A549 (cell line): ENCODE measurements at regions of chr1 and their contacts with region 1.

Region 1: DNA sequence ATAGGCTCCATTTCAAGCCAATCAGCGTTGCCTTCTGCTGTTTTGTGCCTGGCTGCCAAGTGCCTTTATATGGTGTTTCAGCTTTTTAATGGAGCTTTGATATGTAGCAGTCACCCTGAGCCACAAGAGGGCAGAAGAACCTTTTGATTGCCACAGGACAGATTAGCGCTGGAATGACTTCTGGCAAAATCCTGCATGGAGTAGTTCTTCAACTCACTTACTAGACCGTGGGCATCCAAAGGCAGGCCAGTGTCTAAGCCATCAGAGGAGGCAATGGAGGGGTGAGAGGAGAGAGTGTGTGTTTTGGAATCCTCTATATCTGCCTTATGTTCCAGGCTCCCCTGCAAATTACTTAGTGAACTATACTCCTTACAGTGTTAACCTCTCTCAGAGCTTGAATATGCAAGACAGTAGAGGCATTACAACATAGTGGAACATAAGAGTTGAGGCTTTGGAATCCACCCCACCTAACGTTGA is 56.2 kb downstream of the ST3GAL3 start:
- DNase-seq: peak; percentile 41 to 79
- ATAC-seq: peak; percentile 99
- H3K4me3 ChIP-seq: no peak overlapping the region
- H3K27ac ChIP-seq: peak overlapping the region; percentile 52 to 65; a peak in 4 of 6 replicates
- H3K4me1 ChIP-seq: peaks cover 10% of the 10 kb centered on the region; the same call in 1 of the 3 replicates
- CTCF ChIP-seq: peak; percentile 83
- EP300 ChIP-seq: no peak
- POLR2A ChIP-seq: no peak
- RAD21 ChIP-seq: peak; percentile 92 to 96

Region 2: GRCh38 chr1:43622471-43622870 is 141.1 kb before region 1 on chr1:
- CTCF ChIA-PET with region 1: no interaction called
- POLR2A ChIA-PET with region 1: no interaction called
- DNase-seq: no peak
- ATAC-seq: no peak
- H3K4me3 ChIP-seq: no peak overlapping the region
- H3K27ac ChIP-seq: no peak overlapping the region
- H3K4me1 ChIP-seq: no peaks in the 10 kb centered on the region
- CTCF ChIP-seq: no peak
- EP300 ChIP-seq: no peak
- POLR2A ChIP-seq: no peak
- RAD21 ChIP-seq: no peak

Region 3: GRCh38 chr1:43774359-43774758 is 10.8 kb after region 1 on chr1:
- CTCF ChIA-PET with region 1: interaction called, 19 read pairs
- POLR2A ChIA-PET with region 1: no interaction called
- DNase-seq: no peak
- ATAC-seq: peak in 1 of 2 experiments; percentile 52; a peak in 3 of 6 replicates
- H3K4me3 ChIP-seq: no peak overlapping the region
- H3K27ac ChIP-seq: peak overlapping the region; percentile 21 to 56; a peak in 2 of 6 replicates
- H3K4me1 ChIP-seq: peaks cover 31% of the 10 kb centered on the region
- CTCF ChIP-seq: no peak
- EP300 ChIP-seq: no peak
- POLR2A ChIP-seq: no peak
- RAD21 ChIP-seq: no peak

Region 4: DNA sequence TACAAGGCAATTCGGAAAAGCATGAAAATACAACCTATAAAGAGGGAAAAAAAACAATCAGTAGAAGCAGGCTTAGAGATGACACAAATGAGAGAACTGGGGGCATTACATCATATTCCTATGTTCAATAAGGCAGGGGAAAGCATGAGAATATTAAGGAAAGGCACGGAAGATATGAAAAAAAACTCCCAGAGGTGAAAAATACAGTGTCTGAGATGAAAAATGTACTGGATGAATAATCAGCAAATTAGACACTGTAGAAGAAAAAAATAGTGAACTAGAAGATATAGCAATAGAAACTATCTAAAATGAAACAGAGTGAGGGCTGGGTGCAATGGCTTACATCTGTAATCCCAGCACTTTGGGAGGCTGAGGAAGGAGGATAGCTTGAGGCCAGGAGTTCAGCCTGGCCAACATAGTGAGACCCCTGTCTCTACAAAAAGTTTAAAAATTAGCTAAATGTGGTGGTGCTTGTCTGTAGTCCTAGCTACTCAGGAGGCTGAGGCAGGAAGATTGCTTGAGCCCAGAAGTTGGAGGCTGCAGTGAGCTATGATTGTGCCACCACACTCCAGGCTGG is 45.6 kb after region 1 on chr1:
- CTCF ChIA-PET with region 1: interaction called, 12 read pairs
- POLR2A ChIA-PET with region 1: no interaction called
- DNase-seq: no peak
- ATAC-seq: no peak
- H3K4me3 ChIP-seq: no peak overlapping the region
- H3K27ac ChIP-seq: no peak overlapping the region
- H3K4me1 ChIP-seq: no peaks in the 10 kb centered on the region
- CTCF ChIP-seq: no peak
- EP300 ChIP-seq: no peak
- POLR2A ChIP-seq: no peak
- RAD21 ChIP-seq: no peak

Region 5: GRCh38 chr1:43822040-43822439 is 58.5 kb after region 1 on chr1:
- CTCF ChIA-PET with region 1: no interaction called
- POLR2A ChIA-PET with region 1: no interaction called
- DNase-seq: peak; percentile 71 to 85
- ATAC-seq: peak; percentile 92 to 93
- H3K4me3 ChIP-seq: no peak overlapping the region
- H3K27ac ChIP-seq: peak overlapping the region; percentile 67 to 78
- H3K4me1 ChIP-seq: peaks cover 16% of the 10 kb centered on the region
- CTCF ChIP-seq: no peak
- EP300 ChIP-seq: no peak
- POLR2A ChIP-seq: no peak
- RAD21 ChIP-seq: no peak

Region 6: DNA sequence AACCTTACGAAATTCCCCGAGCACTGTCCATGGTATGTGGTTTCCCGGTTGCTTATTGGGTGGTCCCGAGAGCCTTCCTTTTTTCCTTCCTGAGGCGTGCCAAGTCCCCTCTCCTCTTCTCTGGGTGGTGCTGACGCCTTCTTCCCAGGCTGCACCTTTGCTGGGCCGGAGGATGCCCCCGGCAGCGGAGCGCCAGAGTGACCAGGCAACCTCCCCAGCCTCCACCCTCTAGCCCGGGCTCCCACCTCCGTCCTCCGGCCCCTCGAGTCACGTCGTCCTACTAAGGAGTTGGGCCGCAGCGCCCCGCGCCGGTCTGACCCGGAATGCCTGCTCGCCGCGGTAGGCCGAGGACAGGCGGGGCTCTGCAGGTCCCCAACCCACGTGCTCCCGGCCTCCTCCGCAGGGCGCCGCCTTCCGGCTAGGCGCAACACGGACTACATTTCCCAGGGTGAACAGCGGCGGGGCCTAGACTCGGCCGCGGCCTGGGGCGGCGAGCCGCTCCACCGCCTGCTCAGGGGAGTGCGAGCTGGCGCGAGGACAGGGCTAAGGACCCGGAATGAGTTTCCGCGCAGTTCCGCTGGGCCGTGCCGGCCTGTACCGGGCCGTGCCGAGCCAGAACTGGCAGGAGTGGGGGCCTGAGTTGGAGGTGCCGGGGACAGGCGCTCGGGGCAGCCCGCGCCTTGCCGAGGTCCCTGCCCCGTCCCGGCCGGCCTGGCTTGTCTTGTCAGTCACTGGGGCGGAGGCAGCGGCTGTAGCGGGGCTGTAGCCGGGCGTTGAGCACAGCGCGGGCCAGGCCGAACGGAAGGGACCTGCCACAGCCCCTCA is 182.9 kb after region 1 on chr1 and contains the start of gene IPO13:
- CTCF ChIA-PET with region 1: interaction called, 243 read pairs
- POLR2A ChIA-PET with region 1: no interaction called
- DNase-seq: peak; percentile 90 to 96
- ATAC-seq: peak; percentile 97 to 98
- H3K4me3 ChIP-seq: peak within 1 kb of the TSS; percentile 68
- H3K27ac ChIP-seq: peak within 1 kb of the TSS; percentile 94 to 97
- H3K4me1 ChIP-seq: peaks cover 13% of the 10 kb centered on the region; the same call in 1 of the 3 replicates
- CTCF ChIP-seq: peak; percentile 55
- EP300 ChIP-seq: no peak
- POLR2A ChIP-seq: peak; percentile 81
- RAD21 ChIP-seq: peak; percentile 58 to 68; a peak in 4 of 5 replicates
- polyA plus RNA-seq, gene IPO13: 8.1 and 12.9 TPM in 2 replicates

Region 7: DNA sequence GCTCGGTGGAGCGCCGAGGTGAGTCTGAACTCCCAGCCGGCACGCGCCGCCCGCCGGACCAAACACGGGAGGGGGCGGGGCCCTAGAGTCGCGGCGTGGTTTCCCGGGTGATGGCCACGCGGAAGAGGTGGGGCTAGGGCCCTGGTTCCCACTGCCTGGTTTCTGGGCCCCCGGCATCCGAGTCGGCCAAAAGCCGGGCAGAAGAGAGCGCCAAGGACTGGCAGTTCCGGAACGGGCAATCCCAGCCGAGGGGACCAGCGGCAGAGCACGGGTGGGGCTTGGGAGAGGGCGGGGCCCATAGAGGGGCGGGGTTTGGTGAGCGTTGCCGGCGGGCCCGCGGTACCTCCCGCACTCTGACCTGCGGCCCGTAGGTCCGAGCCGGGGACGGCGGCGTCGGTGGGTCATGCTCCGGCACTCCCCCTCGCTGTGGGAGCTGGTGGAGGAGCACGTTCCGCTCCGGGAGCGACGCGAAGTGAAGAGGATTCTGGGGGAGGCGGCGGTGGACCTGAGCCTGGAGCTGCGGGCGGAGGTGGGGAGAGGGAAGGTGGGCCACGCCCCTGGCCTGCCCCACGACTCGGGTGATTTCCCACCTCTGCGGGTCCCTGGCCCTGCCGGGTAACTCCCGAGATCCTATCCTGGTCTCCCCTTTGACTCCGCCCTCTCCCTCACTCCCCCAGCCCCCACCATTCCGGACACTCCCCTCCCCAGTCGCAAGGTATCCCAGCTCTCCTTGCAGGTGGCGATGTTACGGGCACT is 228.1 kb after region 1 on chr1 and contains the start of gene CCDC24:
- CTCF ChIA-PET with region 1: interaction called, 18 read pairs
- POLR2A ChIA-PET with region 1: no interaction called
- DNase-seq: peak; percentile 65 to 83
- ATAC-seq: peak; percentile 73 to 87
- H3K4me3 ChIP-seq: peak within 1 kb of the TSS; percentile 84
- H3K27ac ChIP-seq: peak within 1 kb of the TSS; percentile 87 to 89
- H3K4me1 ChIP-seq: peaks cover 27% of the 10 kb centered on the region
- CTCF ChIP-seq: no peak
- EP300 ChIP-seq: no peak
- POLR2A ChIP-seq: peak; percentile 43
- RAD21 ChIP-seq: no peak
- polyA plus RNA-seq, gene CCDC24: 2.0 and 2.9 TPM in 2 replicates

Region 8: GRCh38 chr1:44049839-44050238 is 286.3 kb after region 1 on chr1:
- CTCF ChIA-PET with region 1: interaction called, 22 read pairs
- POLR2A ChIA-PET with region 1: no interaction called
- DNase-seq: peak in 1 of 2 experiments; percentile 50
- ATAC-seq: peak; percentile 49 to 65; a peak in 5 of 6 replicates
- H3K4me3 ChIP-seq: peak overlapping the region; percentile 34; the same call in 1 of the 3 replicates
- H3K27ac ChIP-seq: peak overlapping the region; percentile 86 to 91
- H3K4me1 ChIP-seq: peaks cover 33% of the 10 kb centered on the region
- CTCF ChIP-seq: no peak
- EP300 ChIP-seq: no peak
- POLR2A ChIP-seq: no peak
- RAD21 ChIP-seq: no peak